RWPE1 (cell line): ENCODE measurements at regions of chr1 and their contacts with region 1.

Region 1: GRCh38 chr1:162310337-162310736 is 66.3 kb downstream of the SPATA46 start:
- DNase-seq: peak; percentile 45
- H3K27ac ChIP-seq: no peak overlapping the region
- CTCF ChIP-seq: no peak

Region 2: DNA sequence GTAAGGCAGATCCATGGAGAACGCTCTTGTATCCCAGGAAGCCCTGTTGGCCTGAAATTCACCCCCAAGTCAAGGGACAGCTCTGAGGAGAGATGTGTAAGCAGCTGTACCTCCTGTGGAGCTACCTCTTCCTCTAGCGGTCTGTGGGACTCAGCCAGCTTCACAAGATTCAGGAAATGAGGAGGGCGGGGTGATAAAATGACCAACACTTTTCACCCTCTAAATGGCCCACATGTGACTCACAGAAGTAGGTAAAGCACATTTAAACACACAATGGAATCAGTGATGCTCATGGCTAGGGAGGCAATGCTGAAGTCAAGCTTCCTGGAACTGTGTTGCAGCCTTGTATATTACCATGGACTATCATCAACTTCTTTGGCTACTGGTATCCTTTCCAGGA is 101.7 kb after region 1 on chr1 and contains the start of gene SH2D1B:
- CTCF ChIA-PET with region 1: interaction called, 10 read pairs
- POLR2A ChIA-PET with region 1: no interaction called
- DNase-seq: no peak
- H3K27ac ChIP-seq: no peak within 1 kb of the TSS
- CTCF ChIP-seq: no peak